PC-3 (cell line): ENCODE measurements at regions of chr10 and their contacts with region 1.

Region 1: GRCh38 chr10:89954787-89955566 is 253.6 kb downstream of the KIF20B start:
- DNase-seq: peak; percentile 45
- ATAC-seq: no peak
- H3K4me3 ChIP-seq: no peak overlapping the region
- H3K27ac ChIP-seq: no peak overlapping the region
- H3K4me1 ChIP-seq: no peaks in the 10 kb centered on the region
- H3K27me3 ChIP-seq: no peaks in the 10 kb centered on the region
- CTCF ChIP-seq: peak; percentile 60

Region 2: DNA sequence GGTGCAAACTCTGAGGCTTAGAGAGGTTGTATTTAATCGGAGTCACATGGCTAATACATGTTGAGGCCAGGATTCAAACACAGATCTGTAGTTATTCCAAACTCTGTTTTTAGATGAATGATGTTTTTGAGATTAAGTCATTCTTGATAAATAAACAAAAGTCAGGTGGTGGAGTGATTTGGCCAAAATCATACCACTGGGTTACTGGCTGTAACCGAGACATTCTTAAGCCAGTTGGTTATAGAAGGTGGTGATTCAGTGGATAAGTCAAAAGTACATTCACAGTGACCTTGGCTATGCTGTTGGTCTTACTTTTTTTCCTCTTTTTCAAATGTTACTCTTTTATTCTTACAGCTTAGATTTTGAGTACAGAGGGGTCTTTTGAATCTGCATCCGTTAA is 107.8 kb after region 1 on chr10:
- CTCF ChIA-PET with region 1: no interaction called
- POLR2A ChIA-PET with region 1: no interaction called
- intact Hi-C with region 1: no loop called
- DNase-seq: no peak
- ATAC-seq: no peak
- H3K4me3 ChIP-seq: no peak overlapping the region
- H3K27ac ChIP-seq: no peak overlapping the region
- H3K4me1 ChIP-seq: no peaks in the 10 kb centered on the region
- H3K27me3 ChIP-seq: no peaks in the 10 kb centered on the region
- CTCF ChIP-seq: no peak

Region 3: GRCh38 chr10:90141791-90142190 is 186.8 kb after region 1 on chr10:
- CTCF ChIA-PET with region 1: no interaction called
- POLR2A ChIA-PET with region 1: no interaction called
- intact Hi-C with region 1: loop called (anchors 5 kb)
- DNase-seq: no peak
- ATAC-seq: no peak
- H3K4me3 ChIP-seq: no peak overlapping the region
- H3K27ac ChIP-seq: no peak overlapping the region
- H3K4me1 ChIP-seq: no peaks in the 10 kb centered on the region
- H3K27me3 ChIP-seq: no peaks in the 10 kb centered on the region
- CTCF ChIP-seq: no peak

Region 4: DNA sequence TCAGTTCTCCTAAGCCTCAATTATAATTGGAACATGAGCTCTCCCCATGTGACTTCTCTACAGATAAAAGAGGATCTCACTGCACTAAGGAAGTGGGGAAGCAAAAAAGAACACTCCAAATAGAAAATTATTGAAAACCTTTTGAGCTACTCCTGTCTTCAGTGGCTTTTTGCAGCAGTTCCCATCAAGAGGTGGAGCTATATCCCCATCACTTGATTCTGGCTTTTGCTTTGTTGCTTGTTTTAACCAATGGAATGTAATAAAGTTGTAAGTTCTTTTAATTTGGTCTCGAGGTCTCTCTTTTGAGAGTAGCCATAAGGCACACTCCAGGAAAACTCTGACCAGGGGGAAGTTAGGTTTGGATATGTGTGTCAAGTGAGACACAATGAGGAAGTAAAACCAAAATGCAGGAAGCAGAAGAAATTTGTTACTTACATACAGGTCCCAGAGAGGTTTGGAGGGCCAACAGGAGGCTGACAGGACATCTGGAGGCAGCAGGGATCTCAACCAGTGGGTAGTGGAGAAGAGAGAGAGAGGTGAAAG is 333.5 kb after region 1 on chr10:
- CTCF ChIA-PET with region 1: no interaction called
- POLR2A ChIA-PET with region 1: no interaction called
- intact Hi-C with region 1: loop called (anchors 5 kb)
- DNase-seq: peak; percentile 53
- ATAC-seq: peak; percentile 66
- H3K4me3 ChIP-seq: no peak overlapping the region
- H3K27ac ChIP-seq: peak overlapping the region; percentile 42
- H3K4me1 ChIP-seq: peaks cover 19% of the 10 kb centered on the region
- H3K27me3 ChIP-seq: no peaks in the 10 kb centered on the region
- CTCF ChIP-seq: peak; percentile 63